ENCODE measurements at regions of chr6 and their contacts with region 1.

Region 1: GRCh38 chr6:33075568-33076405 is at the start of gene HLA-DPB1:
- DNase-seq: peak; percentile 96
- ATAC-seq: peak; percentile 81
- H3K4me3 ChIP-seq: peak within 1 kb of the TSS; percentile 82
- H3K27ac ChIP-seq: peak within 1 kb of the TSS; percentile 99
- H3K4me1 ChIP-seq: peaks cover 22% of the 10 kb centered on the region
- H3K27me3 ChIP-seq: no peaks in the 10 kb centered on the region
- CTCF ChIP-seq: no peak
- EP300 ChIP-seq: no peak
- POLR2A ChIP-seq: peak; percentile 89
- RAD21 ChIP-seq: no peak
- polyA plus RNA-seq, gene HLA-DPB1: 101 to 177 TPM

Region 2: GRCh38 chr6:33008944-33009861 is 66.6 kb before region 1 on chr6 and contains the start of gene HLA-DOA:
- CTCF ChIA-PET with region 1: interaction called, 281 read pairs
- POLR2A ChIA-PET with region 1: interaction called, 240 read pairs
- RAD21 ChIA-PET with region 1: interaction called, 139 read pairs
- SMC1A ChIA-PET with region 1: interaction called, 177 read pairs
- in situ Hi-C with region 1: no loop called
- intact Hi-C with region 1: loop called (anchors 2 kb)
- DNase-seq: peak; percentile 75
- ATAC-seq: peak; percentile 98
- H3K4me3 ChIP-seq: peak within 1 kb of the TSS; percentile 100
- H3K27ac ChIP-seq: peak within 1 kb of the TSS; percentile 75
- H3K4me1 ChIP-seq: peaks cover 15% of the 10 kb centered on the region
- H3K27me3 ChIP-seq: no peaks in the 10 kb centered on the region
- CTCF ChIP-seq: no peak
- EP300 ChIP-seq: no peak
- POLR2A ChIP-seq: peak; percentile 93
- RAD21 ChIP-seq: no peak
- polyA plus RNA-seq, gene HLA-DOA: 8.8 to 21.1 TPM

Region 3: GRCh38 chr6:33040157-33040556 is 35.6 kb before region 1 on chr6:
- CTCF ChIA-PET with region 1: interaction called, 5 read pairs
- POLR2A ChIA-PET with region 1: interaction called, 18 read pairs
- RAD21 ChIA-PET with region 1: interaction called, 3 read pairs
- SMC1A ChIA-PET with region 1: interaction called, 8 read pairs
- in situ Hi-C with region 1: no loop called
- intact Hi-C with region 1: no loop called
- DNase-seq: peak; percentile 41
- ATAC-seq: peak; percentile 91
- H3K4me3 ChIP-seq: no peak overlapping the region
- H3K27ac ChIP-seq: no peak overlapping the region
- H3K4me1 ChIP-seq: peaks cover 7% of the 10 kb centered on the region; the same call in 1 of the 2 replicates
- H3K27me3 ChIP-seq: no peaks in the 10 kb centered on the region
- CTCF ChIP-seq: no peak
- EP300 ChIP-seq: no peak
- POLR2A ChIP-seq: no peak
- RAD21 ChIP-seq: no peak

Region 4: DNA sequence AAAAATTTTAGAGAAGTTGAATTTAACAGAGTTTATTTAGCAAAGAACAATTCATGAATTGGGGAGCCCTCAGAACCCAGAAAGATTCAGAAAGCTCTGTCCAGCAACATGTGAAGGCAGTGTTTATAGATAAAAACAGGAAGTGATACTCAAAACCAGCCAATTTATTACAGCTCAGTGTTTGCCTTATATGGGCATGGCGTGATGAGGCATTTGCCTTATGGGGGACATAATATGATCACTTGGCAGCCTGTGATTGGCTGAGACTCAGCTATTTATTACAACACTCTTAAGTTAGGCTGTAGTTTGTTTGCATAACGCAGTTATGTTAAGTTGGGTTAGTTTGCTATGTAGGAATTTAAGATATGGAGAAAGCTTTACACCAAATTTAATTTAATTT is 13.8 kb before region 1 on chr6:
- CTCF ChIA-PET with region 1: interaction called, 11 read pairs
- POLR2A ChIA-PET with region 1: interaction called, 22 read pairs
- RAD21 ChIA-PET with region 1: interaction called, 10 read pairs
- SMC1A ChIA-PET with region 1: interaction called, 21 read pairs
- in situ Hi-C with region 1: no loop called
- intact Hi-C with region 1: no loop called
- DNase-seq: peak; percentile 62
- ATAC-seq: peak; percentile 94
- H3K4me3 ChIP-seq: no peak overlapping the region
- H3K27ac ChIP-seq: peak overlapping the region; percentile 66
- H3K4me1 ChIP-seq: peaks cover 13% of the 10 kb centered on the region
- H3K27me3 ChIP-seq: no peaks in the 10 kb centered on the region
- CTCF ChIP-seq: no peak
- EP300 ChIP-seq: peak in 1 of 2 experiments; percentile 46; a peak in 1 of 4 replicates
- POLR2A ChIP-seq: no peak
- RAD21 ChIP-seq: no peak

Region 5: DNA sequence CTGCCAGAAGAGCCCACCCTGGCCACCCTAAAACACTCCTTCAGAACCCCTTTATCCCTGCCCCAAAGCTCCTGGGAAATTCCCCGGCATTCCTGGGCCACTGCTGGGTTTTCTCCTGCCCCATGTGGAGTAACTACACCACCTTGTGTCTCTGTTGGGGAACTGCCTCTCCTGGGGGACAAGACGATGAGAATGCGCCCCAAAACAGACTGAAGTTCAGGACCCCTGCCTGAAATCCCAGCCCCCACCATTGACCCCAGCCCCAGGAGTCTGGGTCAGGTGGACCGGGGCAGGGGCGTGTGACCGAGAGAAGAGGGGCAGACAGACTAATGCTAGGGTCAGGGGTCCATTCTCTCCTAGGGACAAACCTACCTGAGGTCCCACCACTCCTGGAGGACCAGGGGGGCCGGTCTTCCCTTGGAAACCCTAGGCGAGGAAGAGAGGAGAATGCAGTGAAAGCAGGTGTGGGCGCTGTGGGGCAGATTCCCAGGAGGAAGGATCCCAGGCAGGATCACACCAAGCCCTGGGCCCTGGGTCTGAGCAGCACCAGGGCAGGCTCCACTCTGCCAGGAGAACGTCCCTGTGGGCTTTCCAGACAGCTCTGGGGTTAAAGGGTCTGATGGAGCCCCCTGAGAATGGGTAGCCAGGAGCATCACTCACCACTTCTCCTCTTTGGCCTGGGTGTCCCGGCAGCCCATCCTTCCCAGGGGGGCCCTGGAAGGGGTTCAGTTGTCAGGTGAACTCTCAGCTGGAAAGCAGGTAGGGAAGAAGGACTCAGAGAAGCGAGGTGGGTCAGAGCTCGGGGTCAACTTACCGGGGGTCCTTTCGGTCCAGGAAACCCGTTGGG is 97.1 kb after region 1 on chr6:
- CTCF ChIA-PET with region 1: interaction called, 4 read pairs
- POLR2A ChIA-PET with region 1: interaction called, 11 read pairs
- RAD21 ChIA-PET with region 1: interaction called, 3 read pairs
- SMC1A ChIA-PET with region 1: interaction called, 3 read pairs
- in situ Hi-C with region 1: no loop called
- intact Hi-C with region 1: no loop called
- DNase-seq: no peak
- ATAC-seq: peak; percentile 39
- H3K4me3 ChIP-seq: no peak overlapping the region
- H3K27ac ChIP-seq: no peak overlapping the region
- H3K4me1 ChIP-seq: no peaks in the 10 kb centered on the region; the same call in 1 of the 2 replicates
- H3K27me3 ChIP-seq: no peaks in the 10 kb centered on the region
- CTCF ChIP-seq: peak; percentile 80 to 83 (median 83)
- EP300 ChIP-seq: no peak
- POLR2A ChIP-seq: no peak
- RAD21 ChIP-seq: peak; percentile 96

Region 6: DNA sequence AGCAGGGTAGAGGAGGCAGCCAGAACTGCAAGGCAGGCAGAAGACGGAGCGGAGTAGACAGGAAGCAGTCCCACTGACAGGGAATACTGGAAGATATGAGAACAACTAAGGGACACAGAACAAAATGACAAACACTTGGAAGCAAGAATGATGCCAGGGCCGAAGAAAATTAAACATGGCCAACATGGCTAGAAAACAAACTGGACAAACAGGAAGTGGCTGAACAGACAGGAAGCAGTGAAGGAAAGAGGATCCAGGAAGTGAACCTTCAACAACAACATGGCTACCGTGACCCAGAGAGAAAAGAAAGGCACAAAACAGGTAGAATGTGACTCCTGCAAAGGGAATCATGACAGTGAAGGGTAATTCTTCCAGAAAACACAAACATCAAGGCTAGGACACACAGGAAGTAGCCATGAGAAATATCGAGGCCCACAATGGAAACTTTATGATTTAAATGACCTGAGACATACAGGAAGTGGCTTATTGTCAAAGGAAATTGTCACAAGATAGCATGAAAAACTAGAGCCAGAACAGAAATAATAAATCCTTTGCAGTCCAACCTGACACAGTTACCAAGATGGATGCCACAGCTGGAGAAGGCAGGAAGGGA is 107.4 kb after region 1 on chr6:
- CTCF ChIA-PET with region 1: no interaction called
- POLR2A ChIA-PET with region 1: no interaction called
- RAD21 ChIA-PET with region 1: no interaction called
- SMC1A ChIA-PET with region 1: no interaction called
- in situ Hi-C with region 1: no loop called
- intact Hi-C with region 1: no loop called
- DNase-seq: no peak
- ATAC-seq: no peak
- H3K4me3 ChIP-seq: no peak overlapping the region
- H3K27ac ChIP-seq: peak overlapping the region; percentile 48; the same call in 1 of the 2 replicates
- H3K4me1 ChIP-seq: peaks cover 6% of the 10 kb centered on the region
- H3K27me3 ChIP-seq: no peaks in the 10 kb centered on the region; a peak in 1 of 4 replicates
- CTCF ChIP-seq: no peak
- EP300 ChIP-seq: no peak
- POLR2A ChIP-seq: no peak
- RAD21 ChIP-seq: no peak

Measured in GM12878 (cell line).